ENCODE measurements at regions of chr6 and their contacts with region 1.

Region 1: GRCh38 chr6:20142676-20143265 is 69.5 kb downstream of the MBOAT1 start:
- DNase-seq: no peak
- ATAC-seq: no peak

Region 2: DNA sequence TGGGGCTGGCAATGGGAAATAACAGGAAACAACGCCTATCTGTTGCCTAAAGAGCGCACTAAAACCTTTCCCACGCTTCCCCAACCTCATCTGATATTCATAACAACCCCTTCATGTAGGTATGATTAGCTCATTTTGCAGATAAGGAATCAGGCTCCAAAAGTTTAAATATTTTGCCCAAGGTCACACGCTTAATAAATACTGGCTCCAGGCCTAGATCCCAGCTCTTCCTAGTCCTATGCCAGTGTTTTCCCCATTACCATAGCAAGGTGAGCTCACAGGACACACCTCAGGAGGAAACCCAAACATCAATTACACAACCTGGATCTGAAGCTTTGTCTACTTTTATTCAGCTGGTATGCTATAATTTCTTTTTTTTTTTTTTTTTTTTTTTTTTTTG is 49.9 kb after region 1 on chr6:
- intact Hi-C with region 1: loop called (anchors 5 kb)
- DNase-seq: no peak
- ATAC-seq: no peak